Breast epithelium (tissue), 4 donors: ENCODE measurements at regions of chr4 and their contacts with region 1.

Region 1: DNA sequence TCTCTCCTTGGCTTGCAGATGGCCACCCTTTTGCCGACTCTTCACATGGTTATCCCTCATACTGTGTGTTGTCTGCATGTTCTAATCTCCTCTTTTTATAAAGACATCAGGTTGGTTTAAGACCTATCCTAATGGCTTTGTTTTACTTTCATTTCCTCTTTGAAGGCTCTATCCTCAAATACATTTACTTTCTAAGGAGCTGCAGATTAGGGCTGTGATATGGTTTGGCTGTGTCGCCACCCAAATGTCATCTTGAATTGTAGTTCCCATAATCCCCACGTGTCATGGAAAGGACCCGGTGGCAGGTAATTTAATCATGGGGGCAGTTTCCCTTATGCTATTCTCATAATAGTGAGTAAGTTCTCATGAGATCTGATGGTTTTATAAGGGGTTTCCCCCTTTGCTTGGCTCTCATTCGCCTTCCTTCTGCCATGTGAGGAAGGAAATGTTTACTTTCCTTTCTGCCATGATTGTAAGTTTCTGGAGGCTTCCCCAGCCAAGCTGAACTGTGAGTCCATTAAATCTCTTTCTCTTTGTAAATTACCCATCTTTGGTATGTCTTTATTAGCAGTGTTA is 204.5 kb downstream of the RELL1 start:
- DNase-seq: no peak
- H3K4me3 ChIP-seq: no peak overlapping the region
- H3K27ac ChIP-seq: no peak overlapping the region
- H3K4me1 ChIP-seq: peaks cover 0 to 4% of the 10 kb centered on the region in 2 donors
- H3K27me3 ChIP-seq: no peaks in the 10 kb centered on the region
- CTCF ChIP-seq: no peak
- POLR2A ChIP-seq: no peak

Region 2: GRCh38 chr4:37279894-37280592 is 201.6 kb before region 1 on chr4:
- intact Hi-C with region 1: no loop called
- DNase-seq: no peak
- H3K4me3 ChIP-seq: no peak overlapping the region
- H3K27ac ChIP-seq: no peak overlapping the region
- H3K4me1 ChIP-seq: no peaks in the 10 kb centered on the region
- H3K27me3 ChIP-seq: no peaks in the 10 kb centered on the region
- CTCF ChIP-seq: no peak
- POLR2A ChIP-seq: no peak

Region 3: DNA sequence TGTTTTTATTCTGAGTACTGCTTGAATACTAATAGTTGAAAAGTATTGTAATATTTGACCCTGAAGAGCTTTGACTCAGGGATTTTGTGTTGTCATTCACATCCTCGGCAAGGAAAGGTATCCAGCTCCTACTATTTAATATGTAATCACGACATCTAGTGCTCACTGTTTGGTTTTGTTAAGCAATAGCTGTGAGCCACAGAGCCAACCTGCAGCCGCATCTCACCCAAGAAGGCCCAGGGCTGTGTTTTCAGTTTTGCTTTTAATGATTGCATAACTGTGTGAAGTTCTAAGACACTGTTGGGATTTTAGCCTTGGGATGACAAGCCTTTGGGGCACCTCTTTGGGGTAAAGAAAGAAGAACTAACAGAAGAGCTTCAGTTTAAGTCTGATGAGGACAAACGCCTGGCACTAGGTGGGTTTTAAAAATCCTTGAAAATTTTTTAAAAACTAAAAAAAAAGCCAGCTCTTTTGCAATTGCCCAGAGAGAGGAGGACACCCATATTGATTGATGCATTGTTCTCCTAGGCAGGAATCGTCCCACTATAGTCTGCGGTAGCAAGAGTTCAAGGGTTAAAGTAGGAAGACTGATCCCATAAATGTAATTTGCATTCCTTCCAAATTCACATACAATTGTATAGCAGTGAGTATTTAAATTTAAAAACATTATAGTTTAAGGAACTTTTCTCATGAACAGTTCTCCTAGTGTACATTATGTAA is 46.7 kb after region 1 on chr4:
- intact Hi-C with region 1: loop called (anchors 2 kb)
- DNase-seq: peak in 1 of 2 donors; percentile 28
- H3K4me3 ChIP-seq: no peak overlapping the region
- H3K27ac ChIP-seq: no peak overlapping the region
- H3K4me1 ChIP-seq: no peaks in the 10 kb centered on the region
- H3K27me3 ChIP-seq: no peaks in the 10 kb centered on the region
- CTCF ChIP-seq: no peak
- POLR2A ChIP-seq: no peak